Naive thymus-derived CD4-positive, alpha-beta T cell (primary cell): ENCODE measurements at regions of chr20 and their contacts with region 1.

Region 1: DNA sequence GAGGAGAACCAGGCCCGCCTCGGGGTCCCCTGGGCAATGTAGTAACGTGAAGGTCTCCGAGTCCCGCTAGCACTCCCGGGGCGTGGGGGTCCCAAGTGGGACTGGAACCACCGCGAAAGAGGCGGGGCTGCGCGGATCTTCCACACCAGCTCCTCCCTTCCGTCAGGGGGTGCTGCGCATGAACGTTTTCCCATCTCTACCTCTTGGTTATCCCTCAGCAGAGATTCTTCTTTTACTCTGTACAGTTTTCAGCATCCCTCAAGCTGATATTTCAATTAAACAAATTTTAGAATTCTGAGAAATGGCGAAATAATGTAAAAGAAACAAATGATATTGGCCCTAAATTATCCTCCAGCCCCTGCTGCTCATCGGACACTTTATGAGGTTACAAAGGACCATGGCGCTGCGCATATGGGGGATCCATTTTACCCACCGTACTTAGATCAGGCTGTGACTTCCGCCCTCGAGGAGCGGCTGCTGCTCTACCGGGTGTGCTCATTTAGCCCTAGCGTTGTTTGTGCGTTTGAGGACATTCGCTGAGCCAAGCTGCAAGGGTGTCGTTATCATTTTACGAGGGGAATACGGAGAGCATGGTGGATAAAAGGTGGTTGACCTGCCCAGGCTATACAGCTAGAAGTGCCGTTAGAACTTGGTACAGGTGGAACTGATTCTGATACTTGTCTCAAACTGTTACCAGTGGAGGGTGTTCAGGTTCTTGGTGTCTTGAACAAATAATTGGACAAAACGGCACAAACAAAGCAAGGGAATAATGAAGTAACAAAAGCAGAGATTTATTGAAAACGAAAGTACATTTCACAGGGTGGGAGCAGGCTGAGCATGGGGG is 75.2 kb upstream of the CHD6 start:
- DNase-seq: peak; percentile 59 to 89 (median 83)
- ATAC-seq: peak; percentile 94
- H3K4me3 ChIP-seq: peak overlapping the region; percentile 63
- H3K4me3 Mint-ChIP-seq: peak overlapping the region; percentile 87 to 94 (median 92)
- H3K27ac ChIP-seq: peak overlapping the region; percentile 77
- H3K27ac Mint-ChIP-seq: peak overlapping the region; percentile 91 to 99 (median 96)
- H3K4me1 ChIP-seq: no peaks in the 10 kb centered on the region
- H3K4me1 Mint-ChIP-seq: peaks cover 6 to 24% (median 20%) of the 10 kb centered on the region in 7 donors
- H3K27me3 ChIP-seq: no peaks in the 10 kb centered on the region
- H3K27me3 Mint-ChIP-seq: peaks cover 2 to 6% (median 5%) of the 10 kb centered on the region in 5 donors

Region 2: GRCh38 chr20:41317536-41318270 is 375.7 kb before region 1 on chr20 and contains the start of gene ZHX3:
- CTCF ChIA-PET with region 1: no interaction called
- POLR2A ChIA-PET with region 1: no interaction called
- intact Hi-C with region 1: loop called (anchors 1 to 2 kb)
- DNase-seq: peak; percentile 90 to 97 (median 95)
- ATAC-seq: peak; percentile 99
- H3K4me3 ChIP-seq: peak within 1 kb of the TSS; percentile 47
- H3K4me3 Mint-ChIP-seq: peak within 1 kb of the TSS; percentile 74 to 92 (median 84)
- H3K27ac ChIP-seq: peak within 1 kb of the TSS; percentile 75
- H3K27ac Mint-ChIP-seq: peak within 1 kb of the TSS; percentile 48 to 87 (median 84)
- H3K4me1 ChIP-seq: no peaks in the 10 kb centered on the region
- H3K4me1 Mint-ChIP-seq: peaks cover 11 to 34% (median 28%) of the 10 kb centered on the region in 7 donors
- H3K27me3 ChIP-seq: no peaks in the 10 kb centered on the region
- H3K27me3 Mint-ChIP-seq: peaks cover 0 to 7% (median 0%) of the 10 kb centered on the region in 5 donors
- total RNA-seq, gene ZHX3: 7.9 to 12.8 (median 9.8) TPM

Region 3: DNA sequence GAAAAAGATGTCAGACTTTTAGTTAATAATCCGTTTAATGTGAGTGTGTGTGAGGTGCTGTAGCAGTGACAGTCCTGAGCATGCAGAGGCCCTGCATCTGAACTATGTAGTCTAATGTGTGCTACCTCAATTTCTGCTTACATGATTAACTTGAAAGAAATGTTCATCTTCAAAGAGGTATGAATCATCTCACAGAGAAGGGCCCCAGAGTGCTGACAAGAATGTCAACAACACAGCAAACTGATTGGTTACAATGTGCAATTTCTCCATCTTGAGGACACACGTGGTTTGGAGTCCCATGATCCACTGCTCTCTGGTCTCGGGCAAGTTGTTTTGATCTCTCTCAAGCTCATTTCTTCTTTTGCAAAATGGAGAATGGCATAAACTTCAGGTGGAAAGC is 265.1 kb before region 1 on chr20:
- CTCF ChIA-PET with region 1: no interaction called
- POLR2A ChIA-PET with region 1: no interaction called
- intact Hi-C with region 1: loop called in 1 of 2 experiments (anchors 1 kb)
- DNase-seq: peak in 8 of 9 donors; percentile 29 to 76 (median 57)
- ATAC-seq: peak; percentile 95
- H3K4me3 ChIP-seq: no peak overlapping the region
- H3K4me3 Mint-ChIP-seq: peak overlapping the region in 9 of 10 donors; percentile 3 to 85 (median 47)
- H3K27ac ChIP-seq: peak overlapping the region; percentile 54
- H3K27ac Mint-ChIP-seq: peak overlapping the region; percentile 31 to 98 (median 89)
- H3K4me1 ChIP-seq: peaks cover 0 to 22% of the 10 kb centered on the region in 2 donors
- H3K4me1 Mint-ChIP-seq: peaks cover 19 to 54% (median 51%) of the 10 kb centered on the region in 7 donors
- H3K27me3 ChIP-seq: no peaks in the 10 kb centered on the region
- H3K27me3 Mint-ChIP-seq: no peaks in the 10 kb centered on the region

Region 4: GRCh38 chr20:41482647-41483552 is 210.5 kb before region 1 on chr20:
- CTCF ChIA-PET with region 1: no interaction called
- POLR2A ChIA-PET with region 1: interaction called, 8 read pairs
- intact Hi-C with region 1: loop called in 1 of 2 experiments (anchors 10 kb)
- DNase-seq: no peak
- ATAC-seq: no peak
- H3K4me3 ChIP-seq: no peak overlapping the region
- H3K4me3 Mint-ChIP-seq: no peak overlapping the region
- H3K27ac ChIP-seq: no peak overlapping the region
- H3K27ac Mint-ChIP-seq: peak overlapping the region in 7 of 9 donors; percentile 25 to 84 (median 68)
- H3K4me1 ChIP-seq: peaks cover 0 to 18% of the 10 kb centered on the region in 2 donors
- H3K4me1 Mint-ChIP-seq: peaks cover 11 to 35% (median 29%) of the 10 kb centered on the region in 7 donors
- H3K27me3 ChIP-seq: no peaks in the 10 kb centered on the region
- H3K27me3 Mint-ChIP-seq: no peaks in the 10 kb centered on the region

Region 5: DNA sequence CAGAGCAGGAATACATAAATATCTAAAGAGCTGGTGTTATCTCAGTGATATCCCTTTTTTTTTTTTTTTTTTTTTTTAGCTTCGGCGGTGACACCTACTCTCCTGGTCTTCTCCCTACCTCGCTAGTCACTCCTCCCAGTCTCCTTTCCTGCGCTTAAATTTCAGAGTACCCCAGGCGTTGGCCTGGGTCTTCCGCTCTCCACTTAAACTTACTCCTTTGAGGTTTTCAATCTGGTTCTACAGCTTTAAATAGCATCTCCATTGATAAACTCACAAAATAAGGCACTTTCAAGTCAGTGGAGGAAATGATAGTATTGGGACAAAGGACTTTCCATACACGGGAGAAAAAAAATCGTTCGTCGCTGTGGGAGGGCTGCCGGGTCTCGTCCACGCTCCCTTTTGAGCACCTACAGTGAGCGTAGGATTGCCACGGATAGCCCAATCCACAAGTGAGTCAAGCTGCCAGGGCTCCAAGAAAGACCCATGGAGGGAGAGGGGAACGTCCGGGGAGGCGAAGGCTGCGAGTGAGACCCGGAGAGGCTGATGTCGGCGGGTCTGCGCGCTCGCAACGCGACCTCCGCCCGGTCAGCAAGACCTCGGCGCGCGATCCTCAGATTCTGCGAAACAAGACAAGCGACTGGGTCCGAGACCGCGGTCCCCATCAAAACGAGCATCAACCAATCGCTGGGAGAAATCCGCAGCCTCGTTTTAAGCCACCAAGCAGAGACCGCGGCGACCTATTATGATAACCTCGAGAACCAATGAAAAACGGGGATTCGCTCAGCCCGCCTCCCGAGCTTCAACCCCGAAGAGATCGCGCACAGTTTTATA is 1763.7 kb after region 1 on chr20:
- CTCF ChIA-PET with region 1: no interaction called
- POLR2A ChIA-PET with region 1: no interaction called
- intact Hi-C with region 1: loop called in 1 of 2 experiments (anchors 2 kb)
- DNase-seq: peak in 7 of 9 donors; percentile 73 to 92 (median 91)
- ATAC-seq: peak; percentile 82
- H3K4me3 ChIP-seq: peak overlapping the region; percentile 86
- H3K4me3 Mint-ChIP-seq: peak overlapping the region; percentile 79 to 100 (median 94)
- H3K27ac ChIP-seq: peak overlapping the region; percentile 100
- H3K27ac Mint-ChIP-seq: peak overlapping the region; percentile 96 to 100 (median 99)
- H3K4me1 ChIP-seq: peaks cover 10 to 29% of the 10 kb centered on the region in 2 donors
- H3K4me1 Mint-ChIP-seq: peaks cover 24 to 42% (median 35%) of the 10 kb centered on the region in 7 donors
- H3K27me3 ChIP-seq: no peaks in the 10 kb centered on the region
- H3K27me3 Mint-ChIP-seq: peaks cover 0 to 14% (median 4%) of the 10 kb centered on the region in 5 donors